ENCODE measurements at regions of chr11 and their contacts with region 1.

Region 1: GRCh38 chr11:77101052-77101537 is 1.5 kb upstream of the OMP start:
- ATAC-seq: peak in 3 of 8 experiments; percentile 10 to 41 (median 16)
- H3K4me3 ChIP-seq: no peak overlapping the region
- H3K27ac ChIP-seq: no peak overlapping the region
- H3K4me1 ChIP-seq: no peaks in the 10 kb centered on the region

Region 2: GRCh38 chr11:77053217-77054015 is 47.7 kb before region 1 on chr11:
- in situ Hi-C with region 1: loop called in 1 of 9 experiments (anchors 10 kb)
- ATAC-seq: peak in 2 of 8 experiments; percentile 5 to 29
- H3K4me3 ChIP-seq: no peak overlapping the region
- H3K27ac ChIP-seq: peak overlapping the region in 1 of 2 donors; percentile 78
- H3K4me1 ChIP-seq: peaks cover 3 to 22% of the 10 kb centered on the region in 2 donors

Region 3: DNA sequence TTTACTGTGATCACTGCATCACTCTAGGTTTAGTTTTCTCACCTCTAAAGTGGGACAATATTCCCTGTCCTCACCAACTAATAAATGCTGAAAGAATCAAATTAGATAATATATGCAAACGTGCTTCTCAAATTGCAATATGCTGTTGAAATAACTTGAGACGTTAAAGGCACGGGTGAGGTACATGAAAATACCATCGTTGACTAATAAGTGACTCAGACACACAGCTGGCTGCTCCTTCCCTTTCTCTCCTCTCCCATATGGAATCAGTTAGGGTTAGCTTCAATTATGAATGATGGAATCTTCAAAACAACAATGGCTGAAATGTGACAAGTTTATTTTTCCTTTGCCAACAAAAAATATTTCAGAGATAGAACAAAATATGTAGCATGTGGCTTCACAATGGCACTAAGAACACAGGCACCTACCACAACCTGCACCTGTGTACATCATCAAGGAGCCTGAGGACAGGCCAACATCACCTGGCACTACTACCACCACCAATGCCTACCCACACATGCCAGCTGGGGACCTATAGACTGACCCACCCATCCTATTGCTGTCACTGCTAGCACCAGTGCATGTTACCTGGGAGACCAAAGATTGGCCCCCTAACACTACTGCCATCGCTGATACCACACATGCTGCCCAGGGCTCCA is 186.6 kb after region 1 on chr11:
- in situ Hi-C with region 1: no loop called
- ATAC-seq: peak in 3 of 8 experiments; percentile 40 to 100 (median 100)
- H3K4me3 ChIP-seq: no peak overlapping the region
- H3K27ac ChIP-seq: no peak overlapping the region
- H3K4me1 ChIP-seq: no peaks in the 10 kb centered on the region